HepG2 (cell line): ENCODE measurements at regions of chr2 and their contacts with region 1.

Region 1: GRCh38 chr2:120174963-120175581 is 48.1 kb downstream of the TMEM185B start:
- DNase-seq: peak; percentile 70
- ATAC-seq: peak; percentile 72
- H3K4me3 ChIP-seq: no peak overlapping the region
- H3K27ac ChIP-seq: no peak overlapping the region
- H3K4me1 ChIP-seq: no peaks in the 10 kb centered on the region
- H3K27me3 ChIP-seq: no peaks in the 10 kb centered on the region
- CTCF ChIP-seq: peak; percentile 79
- EP300 ChIP-seq: no peak
- POLR2A ChIP-seq: no peak
- RAD21 ChIP-seq: peak; percentile 80

Region 2: DNA sequence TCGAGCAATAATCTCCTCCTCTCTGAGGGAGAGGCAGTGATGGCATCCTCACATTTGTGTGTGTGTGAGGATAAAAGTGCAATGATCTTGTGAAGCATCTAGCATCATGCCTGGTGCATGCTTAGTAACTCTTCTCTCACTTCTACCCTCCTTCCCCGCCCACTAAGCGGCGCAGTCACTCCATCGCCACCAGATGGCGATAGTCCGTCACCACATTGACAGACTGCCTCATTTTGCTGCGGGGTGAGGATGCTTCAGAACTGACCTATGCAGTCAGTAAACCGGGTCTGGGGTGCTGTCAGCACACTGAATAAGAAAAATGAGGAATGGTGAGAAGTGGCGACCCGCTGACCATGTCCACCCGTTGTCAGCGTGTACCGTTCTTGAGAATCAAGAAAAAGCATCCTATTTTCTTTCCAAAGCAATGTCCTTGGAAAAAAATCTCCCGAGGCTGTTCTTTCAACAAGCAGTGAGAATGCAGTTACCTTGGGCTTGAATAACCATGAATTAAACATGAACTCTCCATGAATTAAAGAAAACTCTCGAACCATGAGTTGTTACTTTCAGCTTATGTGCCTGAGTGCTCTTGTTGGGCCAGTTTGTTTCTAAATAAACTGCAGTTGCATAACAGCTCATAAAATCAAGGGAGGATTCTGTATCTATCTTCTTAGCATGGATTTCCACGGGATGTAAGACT is 533.4 kb before region 1 on chr2:
- CTCF ChIA-PET with region 1: interaction called, 5 read pairs
- POLR2A ChIA-PET with region 1: no interaction called
- in situ Hi-C with region 1: no loop called
- intact Hi-C with region 1: loop called (anchors 5 kb)
- DNase-seq: peak; percentile 70
- ATAC-seq: peak; percentile 95
- H3K4me3 ChIP-seq: no peak overlapping the region
- H3K27ac ChIP-seq: no peak overlapping the region
- H3K4me1 ChIP-seq: peaks cover 10% of the 10 kb centered on the region; the same call in 1 of the 2 replicates
- H3K27me3 ChIP-seq: peaks cover 2 to 36% of the 10 kb centered on the region in 2 experiments; a peak in 4 of 5 replicates
- CTCF ChIP-seq: peak; percentile 98
- EP300 ChIP-seq: no peak
- POLR2A ChIP-seq: no peak
- RAD21 ChIP-seq: peak; percentile 71

Region 3: DNA sequence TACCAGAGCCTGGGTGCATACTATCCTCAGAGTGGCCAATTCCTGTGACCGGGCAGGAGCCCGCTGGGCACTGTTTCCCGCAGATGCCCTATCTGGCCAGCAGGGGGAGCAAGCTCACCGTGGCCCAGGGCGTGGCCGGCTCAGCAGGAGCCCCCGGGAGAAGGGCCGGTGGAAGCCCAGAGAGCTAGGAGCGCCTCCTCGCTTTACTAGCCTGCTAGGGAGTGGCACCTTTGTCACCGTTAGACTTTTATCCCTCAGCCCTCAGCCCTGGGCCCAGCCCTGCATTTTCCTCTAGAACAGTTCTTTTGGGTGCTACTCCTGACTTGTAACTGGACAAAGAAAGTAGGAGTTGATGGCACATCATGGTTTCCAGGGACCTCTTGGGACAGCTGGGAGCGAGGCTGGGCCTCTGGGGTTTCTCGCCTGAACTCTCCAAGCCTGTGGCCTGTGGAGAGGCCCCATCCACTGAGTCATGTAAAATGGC is 472.1 kb before region 1 on chr2:
- CTCF ChIA-PET with region 1: interaction called, 7 read pairs
- POLR2A ChIA-PET with region 1: no interaction called
- in situ Hi-C with region 1: loop called (anchors 10 kb)
- intact Hi-C with region 1: loop called (anchors 2 kb)
- DNase-seq: peak; percentile 73
- ATAC-seq: peak; percentile 95
- H3K4me3 ChIP-seq: peak overlapping the region in 1 of 3 experiments; percentile 25; a peak in 2 of 6 replicates
- H3K27ac ChIP-seq: no peak overlapping the region
- H3K4me1 ChIP-seq: peaks cover 53% of the 10 kb centered on the region
- H3K27me3 ChIP-seq: peaks cover 2 to 4% of the 10 kb centered on the region in 2 experiments; a peak in 2 of 5 replicates
- CTCF ChIP-seq: peak; percentile 98
- EP300 ChIP-seq: no peak
- POLR2A ChIP-seq: no peak
- RAD21 ChIP-seq: peak; percentile 98

Region 4: DNA sequence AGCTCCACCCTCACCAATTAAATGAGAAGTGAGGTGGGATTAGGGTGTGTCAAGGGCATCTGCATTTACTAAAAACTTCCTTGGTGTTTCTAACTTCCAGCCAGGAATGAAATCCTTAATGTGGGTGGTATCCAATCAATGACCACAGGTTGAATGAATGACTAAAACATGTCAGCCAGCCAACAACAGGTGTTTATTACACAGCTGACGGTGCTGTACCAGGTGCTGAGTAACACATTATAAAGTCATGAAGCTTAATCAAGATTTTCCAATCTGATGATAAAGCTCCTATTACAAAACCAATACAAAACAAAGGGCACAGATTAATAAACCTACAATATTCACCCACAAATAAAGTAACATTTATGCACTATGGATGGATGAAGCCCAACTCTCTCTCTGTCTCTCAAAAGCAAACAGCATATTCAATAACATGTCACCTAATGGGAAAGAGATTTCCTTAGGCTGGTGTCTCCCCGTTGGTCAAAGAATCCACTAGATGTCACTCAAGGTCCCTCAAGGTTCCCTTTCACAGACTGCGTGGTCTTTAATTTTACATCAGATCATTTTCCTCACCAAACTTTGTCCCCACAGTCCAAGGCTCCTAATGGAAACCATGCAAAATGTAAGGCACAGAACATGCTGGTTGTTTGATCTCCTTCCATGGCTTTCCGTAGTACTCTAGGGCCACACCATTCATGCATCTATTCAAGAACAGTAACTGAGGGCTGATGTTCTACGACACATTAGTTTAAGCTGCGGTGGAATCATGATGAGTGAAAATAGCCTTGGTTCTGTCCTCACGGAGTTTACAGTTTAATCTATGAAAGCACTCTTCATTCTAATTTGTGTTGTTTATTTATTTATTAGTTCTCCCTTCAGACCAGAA is 421.8 kb before region 1 on chr2:
- CTCF ChIA-PET with region 1: interaction called, 3 read pairs
- POLR2A ChIA-PET with region 1: interaction called, 4 read pairs
- in situ Hi-C with region 1: no loop called
- intact Hi-C with region 1: loop called (anchors 1 kb)
- DNase-seq: peak; percentile 61
- ATAC-seq: peak; percentile 80
- H3K4me3 ChIP-seq: no peak overlapping the region
- H3K27ac ChIP-seq: no peak overlapping the region
- H3K4me1 ChIP-seq: peaks cover 20% of the 10 kb centered on the region
- H3K27me3 ChIP-seq: no peaks in the 10 kb centered on the region; a peak in 2 of 5 replicates
- CTCF ChIP-seq: peak; percentile 89
- EP300 ChIP-seq: no peak
- POLR2A ChIP-seq: no peak
- RAD21 ChIP-seq: peak; percentile 83

Region 5: DNA sequence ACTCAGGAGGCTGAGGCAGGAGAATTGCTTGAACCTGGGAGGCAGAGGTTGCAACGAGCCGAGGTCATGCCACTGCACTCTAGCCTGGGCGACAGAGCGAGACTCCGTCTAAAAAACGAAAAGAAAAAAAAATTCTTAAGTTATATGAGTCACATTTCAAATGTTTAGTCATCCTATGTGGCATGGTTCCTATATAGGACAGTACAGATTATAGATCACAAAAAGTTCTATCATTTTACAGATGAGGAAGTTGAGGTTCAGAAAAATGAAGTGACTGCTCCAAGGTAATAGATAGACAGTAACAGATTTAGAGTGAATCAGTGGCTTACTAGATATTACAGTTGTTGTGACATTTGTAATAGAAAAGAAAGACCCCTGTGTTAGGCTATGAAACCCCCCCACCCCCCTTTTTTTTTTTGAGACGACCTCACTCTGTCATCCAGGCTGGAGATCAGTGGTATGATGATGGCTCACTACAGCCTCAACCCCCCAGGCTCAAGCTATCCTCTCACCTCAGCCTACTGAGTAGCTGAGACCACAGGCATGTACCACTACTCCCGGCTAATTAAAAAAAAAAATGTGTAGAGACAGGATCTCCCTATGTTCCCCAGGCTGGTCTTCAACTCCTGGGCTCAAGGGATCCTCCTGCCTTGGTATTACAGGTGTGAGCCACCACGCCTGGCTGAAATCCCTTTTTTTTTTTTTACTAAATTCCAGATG is 392.6 kb before region 1 on chr2:
- CTCF ChIA-PET with region 1: no interaction called
- POLR2A ChIA-PET with region 1: no interaction called
- in situ Hi-C with region 1: no loop called
- intact Hi-C with region 1: no loop called
- DNase-seq: no peak
- ATAC-seq: no peak
- H3K4me3 ChIP-seq: no peak overlapping the region
- H3K27ac ChIP-seq: no peak overlapping the region
- H3K4me1 ChIP-seq: no peaks in the 10 kb centered on the region
- H3K27me3 ChIP-seq: no peaks in the 10 kb centered on the region
- CTCF ChIP-seq: no peak
- EP300 ChIP-seq: no peak
- POLR2A ChIP-seq: no peak
- RAD21 ChIP-seq: no peak

Region 6: GRCh38 chr2:120109186-120110061 is 65.6 kb before region 1 on chr2:
- CTCF ChIA-PET with region 1: interaction called, 30 read pairs
- POLR2A ChIA-PET with region 1: no interaction called
- in situ Hi-C with region 1: loop called (anchors 5 kb)
- intact Hi-C with region 1: loop called (anchors 1 kb)
- DNase-seq: peak; percentile 55
- ATAC-seq: peak; percentile 83
- H3K4me3 ChIP-seq: no peak overlapping the region
- H3K27ac ChIP-seq: no peak overlapping the region
- H3K4me1 ChIP-seq: peaks cover 6% of the 10 kb centered on the region; the same call in 1 of the 2 replicates
- H3K27me3 ChIP-seq: no peaks in the 10 kb centered on the region
- CTCF ChIP-seq: peak; percentile 73
- EP300 ChIP-seq: no peak
- POLR2A ChIP-seq: no peak
- RAD21 ChIP-seq: peak; percentile 37; the same call in 1 of the 2 replicates